ENCODE measurements at regions of chr2 and their contacts with region 1.

Region 1: GRCh38 chr2:66574701-66575624 is 140.0 kb downstream of the MEIS1 start:
- ATAC-seq: peak; percentile 17 to 58 (median 40)
- H3K4me3 ChIP-seq: peak overlapping the region; percentile 30 to 57 (median 47)
- H3K27ac ChIP-seq: peak overlapping the region; percentile 90 to 93
- H3K4me1 ChIP-seq: peaks cover 45 to 85% of the 10 kb centered on the region in 2 donors

Region 2: DNA sequence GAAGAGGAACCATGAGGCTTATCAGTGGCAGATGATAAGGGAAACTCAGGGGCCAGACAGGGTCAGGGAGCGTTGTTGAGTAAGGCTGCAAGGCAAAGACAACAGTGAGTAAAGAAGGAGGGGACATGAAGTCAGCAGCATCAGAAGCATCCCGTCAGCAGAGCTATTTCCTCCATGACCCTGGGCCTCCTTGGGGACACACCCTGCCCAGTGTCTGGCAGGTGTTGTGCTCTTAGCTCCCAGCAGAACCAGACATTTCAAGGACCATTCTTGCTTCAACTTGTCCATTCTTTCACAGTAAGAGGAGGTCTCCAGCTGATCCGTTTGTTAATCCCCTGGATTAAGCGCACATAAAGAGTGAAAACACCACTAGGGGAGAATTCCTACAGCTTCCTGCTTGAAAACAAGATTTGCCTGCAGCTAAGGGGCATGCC is 228.7 kb before region 1 on chr2:
- in situ Hi-C with region 1: no loop called
- ATAC-seq: no peak
- H3K4me3 ChIP-seq: no peak overlapping the region
- H3K27ac ChIP-seq: no peak overlapping the region
- H3K4me1 ChIP-seq: no peaks in the 10 kb centered on the region

Region 3: GRCh38 chr2:66445925-66446860 is 128.8 kb before region 1 on chr2:
- in situ Hi-C with region 1: loop called in 1 of 9 experiments (anchors 10 kb)
- ATAC-seq: peak in 7 of 8 experiments; percentile 59 to 76 (median 71)
- H3K4me3 ChIP-seq: peak overlapping the region; percentile 57 to 66 (median 61)
- H3K27ac ChIP-seq: peak overlapping the region; percentile 91 to 96
- H3K4me1 ChIP-seq: peaks cover 58 to 73% of the 10 kb centered on the region in 2 donors

Region 4: GRCh38 chr2:67215214-67216055 is 640.5 kb after region 1 on chr2:
- in situ Hi-C with region 1: loop called in 3 of 9 experiments (anchors 25 kb)
- ATAC-seq: peak; percentile 51 to 99 (median 94)
- H3K4me3 ChIP-seq: no peak overlapping the region
- H3K27ac ChIP-seq: peak overlapping the region; percentile 23 to 29
- H3K4me1 ChIP-seq: peaks cover 6 to 41% of the 10 kb centered on the region in 2 donors

Region 5: GRCh38 chr2:67234439-67234838 is 659.5 kb after region 1 on chr2:
- in situ Hi-C with region 1: loop called in 2 of 9 experiments (anchors 10 to 25 kb)
- ATAC-seq: peak in 6 of 8 experiments; percentile 44 to 77 (median 68)
- H3K4me3 ChIP-seq: no peak overlapping the region
- H3K27ac ChIP-seq: no peak overlapping the region
- H3K4me1 ChIP-seq: peaks cover 0 to 9% of the 10 kb centered on the region in 2 donors

Region 6: GRCh38 chr2:68031542-68032160 is 1456.7 kb after region 1 on chr2:
- in situ Hi-C with region 1: loop called in 1 of 9 experiments (anchors 25 kb)
- ATAC-seq: peak in 6 of 8 experiments; percentile 38 to 64 (median 49)
- H3K4me3 ChIP-seq: no peak overlapping the region
- H3K27ac ChIP-seq: no peak overlapping the region
- H3K4me1 ChIP-seq: peaks cover 0 to 6% of the 10 kb centered on the region in 2 donors

Measured in motor neuron (in vitro differentiated cells).